Tibial artery (tissue), 4 donors: ENCODE measurements at regions of chr2 and their contacts with region 1.

Region 1: DNA sequence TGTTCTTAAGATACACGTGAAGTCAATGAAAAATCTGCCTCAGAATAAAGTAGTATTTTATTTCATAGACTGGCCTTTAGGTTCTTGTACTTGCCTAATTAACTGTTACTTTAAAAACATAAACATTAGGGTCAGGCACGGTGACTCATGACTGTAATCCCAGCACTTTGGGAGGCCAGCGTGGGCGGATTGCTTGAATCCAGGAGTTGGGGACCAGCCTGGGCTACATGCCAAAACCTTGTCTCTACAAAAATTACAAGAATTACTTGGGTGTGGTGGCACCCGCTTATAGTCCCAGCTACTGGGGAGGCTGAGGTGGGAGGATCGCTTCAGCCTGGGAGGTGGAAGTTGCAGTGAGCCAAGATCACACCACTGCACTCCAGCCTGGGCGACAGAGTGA is 16.0 kb upstream of the SNORC start:
- DNase-seq: no peak
- H3K4me3 ChIP-seq: no peak overlapping the region
- H3K27ac ChIP-seq: no peak overlapping the region
- H3K4me1 ChIP-seq: peaks cover 0 to 9% (median 0%) of the 10 kb centered on the region in 4 donors
- H3K27me3 ChIP-seq: no peaks in the 10 kb centered on the region
- CTCF ChIP-seq: no peak

Region 2: DNA sequence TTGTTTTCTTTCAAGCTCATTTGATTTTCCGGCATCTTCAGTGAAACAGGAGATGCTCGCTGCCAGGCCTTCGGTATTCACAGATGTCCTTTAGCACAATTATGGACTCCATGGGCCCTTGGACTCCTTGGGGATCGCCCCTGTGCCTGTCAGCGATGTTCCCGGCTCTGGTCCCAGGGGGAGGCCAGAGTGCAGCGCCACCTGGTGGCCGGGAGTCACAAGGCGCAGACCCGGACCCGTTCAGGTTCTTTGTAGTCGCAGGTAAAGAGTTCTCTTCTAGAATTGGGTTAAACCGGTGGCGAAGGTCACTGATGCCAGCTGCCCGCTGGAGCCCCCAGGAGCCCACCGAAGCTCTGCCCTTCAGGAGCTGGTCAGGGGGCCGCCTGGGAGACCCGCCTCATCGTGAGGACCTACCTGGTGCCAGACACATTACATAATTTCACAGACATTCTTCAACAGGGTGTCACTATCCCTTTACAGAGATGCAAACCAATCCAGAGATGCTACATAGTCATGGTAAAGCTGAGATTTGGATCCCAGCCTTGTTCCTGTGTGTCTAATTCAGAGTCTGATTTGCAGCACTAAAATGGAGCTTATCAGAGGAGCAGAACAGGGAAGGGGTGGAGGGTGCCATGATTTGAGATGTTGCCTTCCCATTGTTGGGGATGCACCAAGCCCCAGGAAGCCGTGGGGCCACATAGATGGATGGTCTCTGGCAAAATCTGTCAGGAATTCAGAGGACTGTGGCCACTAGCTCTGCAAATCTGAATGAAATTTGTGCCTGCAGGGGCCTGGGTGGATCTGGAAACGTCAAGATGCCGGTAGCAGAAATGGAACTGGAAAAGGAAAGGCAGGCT is 200.1 kb after region 1 on chr2:
- intact Hi-C with region 1: loop called (anchors 5 kb)
- DNase-seq: peak in 1 of 2 donors; percentile 60
- H3K4me3 ChIP-seq: no peak overlapping the region
- H3K27ac ChIP-seq: no peak overlapping the region
- H3K4me1 ChIP-seq: peaks cover 0 to 16% (median 7%) of the 10 kb centered on the region in 4 donors
- H3K27me3 ChIP-seq: no peaks in the 10 kb centered on the region
- CTCF ChIP-seq: peak; percentile 83 to 86

Region 3: GRCh38 chr2:233251306-233252116 is 397.4 kb after region 1 on chr2 and contains the start of gene ATG16L1:
- intact Hi-C with region 1: loop called (anchors 5 kb)
- DNase-seq: peak; percentile 91 to 97
- H3K4me3 ChIP-seq: peak within 1 kb of the TSS; percentile 73 to 89
- H3K27ac ChIP-seq: peak within 1 kb of the TSS; percentile 80 to 81
- H3K4me1 ChIP-seq: peaks cover 0 to 30% (median 19%) of the 10 kb centered on the region in 4 donors
- H3K27me3 ChIP-seq: no peaks in the 10 kb centered on the region
- CTCF ChIP-seq: peak; percentile 89 to 96